Gastrocnemius medialis (tissue), 4 donors: ENCODE measurements at regions of chr19 and their contacts with region 1.

Region 1: DNA sequence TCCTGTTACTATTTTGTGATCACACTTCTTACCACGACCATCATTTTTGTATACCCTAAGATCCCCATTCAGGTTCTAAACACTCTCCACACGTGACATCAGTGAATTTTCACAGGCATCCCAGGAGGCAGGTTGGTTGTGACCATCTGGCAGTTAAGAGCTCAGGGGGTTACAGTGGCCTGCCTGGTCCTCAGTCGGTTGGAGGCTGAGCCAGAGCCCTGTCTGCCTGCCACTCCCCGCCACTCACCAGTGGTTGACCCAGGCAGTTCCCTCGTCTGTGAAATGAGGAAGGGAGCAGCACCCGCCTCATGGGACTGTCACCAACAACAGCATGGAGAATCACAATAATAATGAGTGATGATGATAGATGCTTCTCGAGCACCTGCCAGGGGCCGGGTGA is 36.4 kb upstream of the EHD2 start:
- DNase-seq: no peak
- ATAC-seq: no peak
- H3K4me3 ChIP-seq: no peak overlapping the region
- H3K27ac ChIP-seq: peak overlapping the region; percentile 79 to 85 (median 80)
- H3K4me1 ChIP-seq: peaks cover 0 to 4% of the 10 kb centered on the region in 2 donors
- H3K27me3 ChIP-seq: no peaks in the 10 kb centered on the region
- CTCF ChIP-seq: no peak
- POLR2A ChIP-seq: no peak

Region 2: DNA sequence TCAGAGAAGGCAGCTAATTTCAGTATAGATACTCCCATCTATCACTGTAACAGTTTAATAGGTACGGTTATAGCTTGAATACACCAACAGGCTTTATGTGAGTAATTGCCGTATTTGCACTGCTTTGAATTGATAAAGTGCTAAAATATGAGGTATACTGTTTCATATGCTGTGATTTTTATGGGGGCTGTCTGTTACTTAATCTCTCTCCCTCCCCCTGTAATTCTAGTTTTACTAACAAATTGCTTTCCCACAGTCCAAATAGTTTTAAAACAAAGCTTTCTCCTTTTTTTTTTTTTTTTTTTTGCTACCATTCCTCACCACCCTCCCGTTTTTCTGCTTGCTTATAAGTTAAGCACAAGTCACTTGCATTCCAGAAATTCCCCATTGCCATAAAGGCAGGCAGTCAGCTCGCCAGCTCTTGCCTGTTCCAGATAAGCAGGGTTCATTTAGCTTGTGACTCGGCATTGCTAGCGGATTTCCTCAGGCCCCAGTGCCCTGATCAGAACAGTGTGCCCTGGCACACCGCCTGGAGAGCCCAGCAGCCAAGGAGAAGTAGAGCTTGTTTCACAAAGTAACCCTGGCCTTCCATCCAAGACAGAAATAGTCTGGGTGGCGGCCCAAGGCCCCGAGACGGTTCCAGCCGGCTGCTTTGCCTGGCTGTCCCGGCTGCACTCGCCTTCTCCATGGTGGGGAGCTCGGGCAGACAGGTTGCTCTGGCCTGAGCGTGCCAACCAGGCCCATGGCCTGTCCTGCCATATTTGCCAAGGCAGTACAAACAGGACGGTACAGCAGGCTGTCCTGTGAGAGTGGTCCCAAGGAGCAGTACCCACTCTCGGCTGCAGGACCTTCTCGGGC is 700.7 kb before region 1 on chr19:
- in situ Hi-C with region 1: no loop called
- intact Hi-C with region 1: loop called (anchors 10 kb)
- DNase-seq: peak; percentile 97 to 100
- ATAC-seq: peak; percentile 86 to 88
- H3K4me3 ChIP-seq: peak overlapping the region in 2 of 4 donors; percentile 5 to 28
- H3K27ac ChIP-seq: peak overlapping the region; percentile 90 to 97 (median 93)
- H3K4me1 ChIP-seq: peaks cover 71 to 82% of the 10 kb centered on the region in 2 donors
- H3K27me3 ChIP-seq: no peaks in the 10 kb centered on the region
- CTCF ChIP-seq: no peak
- POLR2A ChIP-seq: peak; percentile 51 to 55

Region 3: GRCh38 chr19:47633519-47633918 is 43.3 kb before region 1 on chr19:
- in situ Hi-C with region 1: no loop called
- intact Hi-C with region 1: no loop called
- DNase-seq: no peak
- ATAC-seq: peak; percentile 45 to 84
- H3K4me3 ChIP-seq: no peak overlapping the region
- H3K27ac ChIP-seq: peak overlapping the region; percentile 78 to 88 (median 81)
- H3K4me1 ChIP-seq: peaks cover 40 to 52% of the 10 kb centered on the region in 2 donors
- H3K27me3 ChIP-seq: no peaks in the 10 kb centered on the region
- CTCF ChIP-seq: no peak
- POLR2A ChIP-seq: no peak